ENCODE measurements at regions of chr6 and their contacts with region 1.

Region 1: DNA sequence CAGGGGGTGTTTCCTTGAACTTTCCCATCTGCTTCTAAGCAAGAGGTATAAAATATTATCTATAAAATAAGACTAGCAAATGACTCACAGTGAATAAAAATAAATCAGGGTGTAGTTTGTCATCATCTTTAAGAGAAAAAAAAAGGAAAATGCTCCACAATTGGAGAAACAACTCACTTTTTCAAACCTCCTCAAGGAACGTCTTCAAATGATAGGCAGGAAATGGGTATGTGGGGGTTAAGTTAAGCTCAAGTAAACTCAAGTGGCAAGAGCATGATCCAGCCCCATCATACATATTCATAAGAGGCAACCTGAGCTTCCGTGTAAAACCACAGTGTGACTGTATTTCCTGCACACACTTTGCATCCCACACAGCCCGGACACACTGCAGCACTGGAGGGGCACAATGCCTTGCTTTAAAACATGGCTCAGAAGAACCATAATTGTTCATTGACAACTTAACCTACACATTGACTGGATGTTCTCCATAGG is 58.5 kb upstream of the CEP85L start:
- DNase-seq: peak; percentile 41 to 94 (median 61)
- ATAC-seq: peak; percentile 90
- H3K4me3 ChIP-seq: peak overlapping the region; percentile 83
- H3K4me3 Mint-ChIP-seq: peak overlapping the region; percentile 98
- H3K27ac ChIP-seq: peak overlapping the region; percentile 73 to 78
- H3K27ac Mint-ChIP-seq: peak overlapping the region; percentile 97
- H3K4me1 ChIP-seq: peaks cover 53% of the 10 kb centered on the region
- H3K4me1 Mint-ChIP-seq: peaks cover 82% of the 10 kb centered on the region
- H3K27me3 ChIP-seq: no peaks in the 10 kb centered on the region
- H3K27me3 Mint-ChIP-seq: no peaks in the 10 kb centered on the region
- CTCF ChIP-seq: no peak

Region 2: GRCh38 chr6:117674991-117675657 is 1034.8 kb before region 1 on chr6 and contains the start of gene NUS1:
- CTCF ChIA-PET with region 1: no interaction called
- POLR2A ChIA-PET with region 1: no interaction called
- intact Hi-C with region 1: loop called in 1 of 2 experiments (anchors 10 kb)
- DNase-seq: peak; percentile 95 to 99 (median 98)
- ATAC-seq: peak; percentile 96
- H3K4me3 ChIP-seq: peak within 1 kb of the TSS; percentile 69
- H3K4me3 Mint-ChIP-seq: peak within 1 kb of the TSS; percentile 99
- H3K27ac ChIP-seq: peak within 1 kb of the TSS; percentile 44 to 53
- H3K27ac Mint-ChIP-seq: peak within 1 kb of the TSS; percentile 96
- H3K4me1 ChIP-seq: peaks cover 29% of the 10 kb centered on the region
- H3K4me1 Mint-ChIP-seq: peaks cover 56% of the 10 kb centered on the region
- H3K27me3 ChIP-seq: no peaks in the 10 kb centered on the region
- H3K27me3 Mint-ChIP-seq: no peaks in the 10 kb centered on the region
- CTCF ChIP-seq: peak; percentile 86
- total RNA-seq, gene NUS1: 16.2 to 16.6 TPM

Region 3: GRCh38 chr6:118639054-118639964 is 70.6 kb before region 1 on chr6:
- CTCF ChIA-PET with region 1: interaction called, 3 read pairs
- POLR2A ChIA-PET with region 1: interaction called, 13 read pairs
- intact Hi-C with region 1: no loop called
- DNase-seq: peak in 3 of 14 experiments; percentile 23 to 25 (median 23)
- ATAC-seq: no peak
- H3K4me3 ChIP-seq: no peak overlapping the region
- H3K4me3 Mint-ChIP-seq: peak overlapping the region; percentile 2
- H3K27ac ChIP-seq: no peak overlapping the region
- H3K27ac Mint-ChIP-seq: peak overlapping the region; percentile 3
- H3K4me1 ChIP-seq: peaks cover 7% of the 10 kb centered on the region
- H3K4me1 Mint-ChIP-seq: peaks cover 82% of the 10 kb centered on the region
- H3K27me3 ChIP-seq: no peaks in the 10 kb centered on the region
- H3K27me3 Mint-ChIP-seq: no peaks in the 10 kb centered on the region
- CTCF ChIP-seq: no peak

Region 4: GRCh38 chr6:118668761-118669385 is 41.0 kb before region 1 on chr6:
- CTCF ChIA-PET with region 1: interaction called, 6 read pairs
- POLR2A ChIA-PET with region 1: interaction called, 17 read pairs
- intact Hi-C with region 1: no loop called
- DNase-seq: no peak
- ATAC-seq: no peak
- H3K4me3 ChIP-seq: no peak overlapping the region
- H3K4me3 Mint-ChIP-seq: no peak overlapping the region
- H3K27ac ChIP-seq: no peak overlapping the region
- H3K27ac Mint-ChIP-seq: peak overlapping the region; percentile 87
- H3K4me1 ChIP-seq: peaks cover 14% of the 10 kb centered on the region
- H3K4me1 Mint-ChIP-seq: peaks cover 91% of the 10 kb centered on the region
- H3K27me3 ChIP-seq: no peaks in the 10 kb centered on the region
- H3K27me3 Mint-ChIP-seq: no peaks in the 10 kb centered on the region
- CTCF ChIP-seq: no peak

Region 5: GRCh38 chr6:118724211-118724610 is 14.3 kb after region 1 on chr6:
- CTCF ChIA-PET with region 1: interaction called, 17 read pairs
- POLR2A ChIA-PET with region 1: interaction called, 87 read pairs
- intact Hi-C with region 1: loop called in 1 of 2 experiments (anchors 1 kb)
- DNase-seq: peak in 1 of 14 experiments; percentile 23
- ATAC-seq: peak; percentile 55
- H3K4me3 ChIP-seq: no peak overlapping the region
- H3K4me3 Mint-ChIP-seq: peak overlapping the region; percentile 77
- H3K27ac ChIP-seq: no peak overlapping the region
- H3K27ac Mint-ChIP-seq: peak overlapping the region; percentile 75
- H3K4me1 ChIP-seq: peaks cover 27% of the 10 kb centered on the region
- H3K4me1 Mint-ChIP-seq: peaks cover 77% of the 10 kb centered on the region
- H3K27me3 ChIP-seq: no peaks in the 10 kb centered on the region
- H3K27me3 Mint-ChIP-seq: no peaks in the 10 kb centered on the region
- CTCF ChIP-seq: no peak

Region 6: GRCh38 chr6:118776607-118777549 is 67.0 kb after region 1 on chr6:
- CTCF ChIA-PET with region 1: interaction called, 5 read pairs
- POLR2A ChIA-PET with region 1: interaction called, 11 read pairs
- intact Hi-C with region 1: loop called in 1 of 2 experiments (anchors 1 kb)
- DNase-seq: peak; percentile 35 to 84 (median 54)
- ATAC-seq: peak; percentile 94
- H3K4me3 ChIP-seq: no peak overlapping the region
- H3K4me3 Mint-ChIP-seq: peak overlapping the region; percentile 32
- H3K27ac ChIP-seq: no peak overlapping the region
- H3K27ac Mint-ChIP-seq: peak overlapping the region; percentile 4
- H3K4me1 ChIP-seq: peaks cover 11% of the 10 kb centered on the region
- H3K4me1 Mint-ChIP-seq: peaks cover 24% of the 10 kb centered on the region
- H3K27me3 ChIP-seq: no peaks in the 10 kb centered on the region
- H3K27me3 Mint-ChIP-seq: no peaks in the 10 kb centered on the region
- CTCF ChIP-seq: peak; percentile 87

Region 7: GRCh38 chr6:118893807-118894424 is 184.0 kb after region 1 on chr6 and contains the start of gene ASF1A:
- CTCF ChIA-PET with region 1: interaction called, 4 read pairs
- POLR2A ChIA-PET with region 1: interaction called, 60 read pairs
- intact Hi-C with region 1: loop called (anchors 5 kb)
- DNase-seq: peak; percentile 92 to 99 (median 95)
- ATAC-seq: peak; percentile 76
- H3K4me3 ChIP-seq: peak within 1 kb of the TSS; percentile 94
- H3K4me3 Mint-ChIP-seq: peak within 1 kb of the TSS; percentile 99
- H3K27ac ChIP-seq: peak within 1 kb of the TSS; percentile 91 to 93
- H3K27ac Mint-ChIP-seq: peak within 1 kb of the TSS; percentile 98
- H3K4me1 ChIP-seq: peaks cover 36% of the 10 kb centered on the region
- H3K4me1 Mint-ChIP-seq: peaks cover 80% of the 10 kb centered on the region
- H3K27me3 ChIP-seq: no peaks in the 10 kb centered on the region
- H3K27me3 Mint-ChIP-seq: no peaks in the 10 kb centered on the region
- CTCF ChIP-seq: peak; percentile 17
- total RNA-seq, gene ASF1A: 10.7 to 11.9 TPM

Measured in CD4-positive, alpha-beta T cell (primary cell).